Left lung (tissue), 14 donors: ENCODE measurements at regions of chr2 and their contacts with region 1.

Region 1: GRCh38 chr2:202178342-202178958 is 59.9 kb downstream of the SUMO1 start:
- DNase-seq: peak in 2 of 4 donors; percentile 64 to 71
- ATAC-seq: peak; percentile 94
- H3K4me3 ChIP-seq: no peak overlapping the region
- H3K27ac ChIP-seq: no peak overlapping the region
- H3K4me1 ChIP-seq: no peaks in the 10 kb centered on the region
- H3K27me3 ChIP-seq: no peaks in the 10 kb centered on the region
- CTCF ChIP-seq: peak; percentile 75 to 84

Region 2: DNA sequence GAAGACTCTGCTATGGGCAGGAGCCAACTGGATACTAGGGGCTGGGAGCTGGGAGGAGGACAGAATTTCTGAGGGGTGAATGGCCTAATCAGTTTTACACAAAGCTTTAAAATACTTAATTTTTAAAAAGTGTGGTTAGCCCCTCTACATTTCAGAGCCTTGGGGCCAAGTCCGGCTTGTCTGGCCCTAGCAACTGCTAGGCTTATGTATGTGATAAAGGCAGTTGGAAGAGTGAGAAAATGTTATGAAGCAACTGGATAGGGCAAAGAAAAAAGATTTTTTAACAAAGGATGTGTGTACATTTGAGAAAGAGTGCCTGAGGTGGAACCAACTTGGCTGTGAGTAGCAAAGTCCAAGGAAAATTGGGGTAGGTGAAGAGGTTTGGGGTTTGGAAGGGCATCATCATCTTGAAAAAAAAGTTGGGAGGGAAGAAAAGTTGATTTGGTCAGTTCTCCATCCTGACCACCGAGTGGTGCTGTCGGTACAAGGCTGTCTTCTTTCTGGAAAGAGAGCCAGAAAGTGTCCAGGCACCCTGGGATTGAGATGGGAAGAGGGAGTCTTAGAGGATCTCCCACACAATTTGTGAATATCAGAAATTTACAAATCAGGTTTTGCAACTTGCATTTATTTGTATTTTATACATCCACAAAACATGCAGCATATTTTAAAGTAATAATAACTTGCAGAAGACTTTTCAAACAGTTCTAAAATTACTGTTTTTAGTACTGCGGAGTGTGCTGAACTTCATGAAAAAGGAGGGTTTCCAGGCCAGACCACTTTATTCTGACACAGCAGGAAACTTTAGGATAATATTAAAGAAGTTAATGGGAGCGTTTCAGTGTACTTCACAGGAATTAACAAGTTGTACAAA is 382.6 kb before region 1 on chr2:
- intact Hi-C with region 1: loop called in 1 of 2 experiments (anchors 10 kb)
- DNase-seq: peak in 2 of 4 donors; percentile 23 to 58
- ATAC-seq: peak; percentile 79
- H3K4me3 ChIP-seq: no peak overlapping the region
- H3K27ac ChIP-seq: no peak overlapping the region
- H3K4me1 ChIP-seq: peaks cover 0 to 3% of the 10 kb centered on the region in 2 donors
- H3K27me3 ChIP-seq: no peaks in the 10 kb centered on the region
- CTCF ChIP-seq: peak; percentile 28 to 54

Region 3: GRCh38 chr2:201860636-201861066 is 317.8 kb before region 1 on chr2:
- intact Hi-C with region 1: loop called (anchors 5 to 10 kb)
- DNase-seq: peak in 2 of 4 donors; percentile 74 to 84
- ATAC-seq: peak; percentile 96
- H3K4me3 ChIP-seq: no peak overlapping the region
- H3K27ac ChIP-seq: no peak overlapping the region
- H3K4me1 ChIP-seq: peaks cover 0 to 5% of the 10 kb centered on the region in 2 donors
- H3K27me3 ChIP-seq: peaks cover 0 to 61% of the 10 kb centered on the region in 2 donors
- CTCF ChIP-seq: peak; percentile 74

Region 4: GRCh38 chr2:202033321-202034248 is 144.9 kb before region 1 on chr2 and contains the start of gene FZD7:
- intact Hi-C with region 1: loop called in 1 of 2 experiments (anchors 10 kb)
- DNase-seq: peak; percentile 92 to 97 (median 95)
- ATAC-seq: peak; percentile 93
- H3K4me3 ChIP-seq: peak within 1 kb of the TSS; percentile 61
- H3K27ac ChIP-seq: peak within 1 kb of the TSS; percentile 77 to 94
- H3K4me1 ChIP-seq: peaks cover 8 to 25% of the 10 kb centered on the region in 2 donors
- H3K27me3 ChIP-seq: peaks cover 11 to 78% of the 10 kb centered on the region in 2 donors
- CTCF ChIP-seq: no peak
- polyA plus RNA-seq, gene FZD7: 30.1 to 43.1 (median 40.3) TPM